HAP-1 (cell line): ENCODE measurements at regions of chr2 and their contacts with region 1.

Region 1: GRCh38 chr2:55718165-55719008 is 24.7 kb upstream of the PNPT1 start:
- DNase-seq: peak; percentile 42 to 81
- H3K4me3 ChIP-seq: no peak overlapping the region
- H3K4me1 ChIP-seq: no peaks in the 10 kb centered on the region
- H3K27me3 ChIP-seq: 0 out of 2 replicates have a peak, but pooled peaks cover 2% of the 10 kb centered on the region

Region 2: DNA sequence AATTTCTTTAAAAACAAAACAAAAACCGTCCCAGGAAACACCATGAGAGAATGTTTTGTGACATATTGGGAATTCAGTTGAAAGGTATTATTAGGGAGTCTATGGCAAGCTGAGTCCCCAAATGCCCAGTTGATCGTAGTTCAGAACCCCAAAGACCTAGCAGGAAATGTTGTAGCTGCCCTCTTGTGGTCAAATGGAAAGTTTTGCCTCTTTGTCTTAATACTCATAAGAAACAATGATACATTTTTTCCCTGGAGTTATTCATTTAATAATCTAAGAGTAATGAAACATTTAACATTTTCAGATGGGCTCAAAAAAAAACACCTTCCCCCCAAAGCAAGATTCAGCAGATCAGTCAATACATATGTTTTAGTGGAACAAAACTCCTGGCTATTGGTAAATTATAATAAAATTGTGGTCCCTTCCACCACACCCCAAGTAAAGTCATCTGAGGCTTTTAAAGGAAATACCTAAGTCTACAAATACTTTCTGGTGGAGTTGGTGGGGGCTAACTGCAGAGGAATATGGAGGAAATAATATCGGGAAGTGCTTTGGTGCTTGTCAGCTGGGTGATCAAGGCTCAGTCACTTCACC is 243.0 kb after region 1 on chr2:
- in situ Hi-C with region 1: loop called (anchors 25 kb)
- DNase-seq: peak; percentile 13 to 24
- H3K4me3 ChIP-seq: no peak overlapping the region
- H3K4me1 ChIP-seq: no peaks in the 10 kb centered on the region
- H3K27me3 ChIP-seq: 0 out of 2 replicates have a peak, but pooled peaks cover 2% of the 10 kb centered on the region

Region 3: GRCh38 chr2:56014042-56014730 is 295.8 kb after region 1 on chr2:
- in situ Hi-C with region 1: no loop called
- DNase-seq: no peak
- H3K4me3 ChIP-seq: no peak overlapping the region
- H3K4me1 ChIP-seq: no peaks in the 10 kb centered on the region
- H3K27me3 ChIP-seq: no peaks in the 10 kb centered on the region; the same call in 1 of the 2 replicates

Region 4: DNA sequence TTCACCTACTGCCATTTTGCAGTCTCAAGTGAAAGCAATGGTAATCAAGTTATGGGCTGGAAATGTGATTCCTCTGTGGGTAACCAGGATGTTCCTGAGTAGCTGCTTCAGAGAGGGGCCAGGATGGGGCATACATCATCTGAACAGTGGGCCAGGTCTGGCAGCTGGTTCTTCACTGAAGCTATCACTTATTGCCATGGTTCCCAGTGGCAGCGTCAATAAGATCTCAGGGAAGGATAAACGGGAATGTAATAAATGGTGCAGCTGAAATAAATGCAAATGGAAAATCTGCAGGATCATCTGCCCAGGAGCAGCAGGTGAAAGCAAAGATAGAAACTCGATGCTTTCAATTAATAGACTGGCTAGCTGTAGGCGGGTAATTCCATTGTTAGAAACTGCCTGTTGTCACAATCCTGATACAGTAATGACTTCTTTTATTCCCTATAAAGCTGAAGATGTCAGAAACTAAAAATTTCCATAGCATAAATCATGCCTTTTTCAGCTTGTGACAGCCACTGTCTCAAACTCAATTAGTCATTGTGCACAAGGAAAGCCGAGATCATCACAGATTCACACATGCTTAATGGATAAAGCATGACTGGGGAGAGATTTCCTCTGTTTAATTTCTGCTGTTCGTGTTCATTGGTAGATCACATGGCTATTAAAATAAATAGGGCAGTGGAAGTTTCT is 409.2 kb after region 1 on chr2:
- in situ Hi-C with region 1: loop called (anchors 10 kb)
- DNase-seq: no peak
- H3K4me3 ChIP-seq: no peak overlapping the region
- H3K4me1 ChIP-seq: no peaks in the 10 kb centered on the region
- H3K27me3 ChIP-seq: no peaks in the 10 kb centered on the region

Region 5: DNA sequence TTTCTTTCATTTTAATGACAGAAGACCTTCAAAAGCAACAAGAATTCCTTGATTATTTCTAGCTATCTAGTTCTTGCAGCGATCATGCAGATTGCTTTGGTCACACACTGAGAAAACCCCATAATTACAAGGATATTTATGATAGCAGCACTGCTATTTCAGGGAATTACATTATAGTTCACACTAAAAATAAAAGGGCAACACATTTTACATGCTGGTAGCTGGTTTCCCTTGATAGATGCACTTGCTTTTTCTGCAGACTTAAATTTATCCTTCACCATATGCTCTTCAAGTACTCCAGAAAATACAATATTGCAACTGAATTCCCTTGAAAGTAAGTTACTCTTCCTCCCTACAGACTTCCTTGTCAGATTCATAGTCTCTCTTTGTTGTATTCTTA is 1216.5 kb after region 1 on chr2:
- in situ Hi-C with region 1: no loop called
- DNase-seq: no peak
- H3K4me3 ChIP-seq: no peak overlapping the region
- H3K4me1 ChIP-seq: no peaks in the 10 kb centered on the region
- H3K27me3 ChIP-seq: no peaks in the 10 kb centered on the region